A673 (cell line): ENCODE measurements at regions of chr19 and their contacts with region 1.

Region 1: DNA sequence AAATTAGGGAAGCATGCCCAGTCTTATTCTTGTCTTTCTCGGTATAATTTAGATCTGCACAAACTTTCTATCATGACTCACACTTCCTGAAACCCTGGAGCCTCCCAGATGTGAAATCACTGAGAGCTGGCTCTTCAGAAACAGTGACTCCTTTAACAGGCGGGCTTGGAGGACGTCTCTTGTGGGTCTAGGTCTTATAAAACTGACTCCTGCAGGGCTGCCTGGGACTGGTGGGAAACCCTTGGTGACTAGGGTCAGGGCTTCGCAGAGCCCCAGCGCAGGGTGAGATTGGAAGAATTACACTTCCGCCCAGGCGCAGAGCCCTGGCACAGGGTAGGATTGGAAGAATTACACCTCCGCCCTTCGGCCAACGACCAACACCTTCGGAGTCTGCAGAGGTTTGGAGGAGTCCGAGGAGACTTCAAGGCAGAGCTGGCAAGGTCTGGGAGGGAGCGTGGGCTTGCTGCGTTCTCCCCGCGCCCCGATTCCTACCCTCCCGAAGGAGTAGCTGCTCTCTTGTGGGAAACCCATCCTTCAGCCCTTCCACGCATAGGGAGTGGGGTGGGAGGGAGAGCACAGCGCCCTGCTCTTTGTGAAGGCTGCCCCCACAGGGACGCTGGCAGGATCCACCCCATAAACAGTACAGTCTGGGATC is 43.4 kb upstream of the MAP3K10 start:
- DNase-seq: peak; percentile 95
- H3K4me3 ChIP-seq: peak overlapping the region; percentile 55
- H3K27ac ChIP-seq: peak overlapping the region; percentile 92
- H3K4me1 ChIP-seq: peaks cover 38% of the 10 kb centered on the region
- H3K27me3 ChIP-seq: no peaks in the 10 kb centered on the region
- CTCF ChIP-seq: 0 out of 2 replicates have a peak, but pooled peaks have one; percentile 19

Region 2: DNA sequence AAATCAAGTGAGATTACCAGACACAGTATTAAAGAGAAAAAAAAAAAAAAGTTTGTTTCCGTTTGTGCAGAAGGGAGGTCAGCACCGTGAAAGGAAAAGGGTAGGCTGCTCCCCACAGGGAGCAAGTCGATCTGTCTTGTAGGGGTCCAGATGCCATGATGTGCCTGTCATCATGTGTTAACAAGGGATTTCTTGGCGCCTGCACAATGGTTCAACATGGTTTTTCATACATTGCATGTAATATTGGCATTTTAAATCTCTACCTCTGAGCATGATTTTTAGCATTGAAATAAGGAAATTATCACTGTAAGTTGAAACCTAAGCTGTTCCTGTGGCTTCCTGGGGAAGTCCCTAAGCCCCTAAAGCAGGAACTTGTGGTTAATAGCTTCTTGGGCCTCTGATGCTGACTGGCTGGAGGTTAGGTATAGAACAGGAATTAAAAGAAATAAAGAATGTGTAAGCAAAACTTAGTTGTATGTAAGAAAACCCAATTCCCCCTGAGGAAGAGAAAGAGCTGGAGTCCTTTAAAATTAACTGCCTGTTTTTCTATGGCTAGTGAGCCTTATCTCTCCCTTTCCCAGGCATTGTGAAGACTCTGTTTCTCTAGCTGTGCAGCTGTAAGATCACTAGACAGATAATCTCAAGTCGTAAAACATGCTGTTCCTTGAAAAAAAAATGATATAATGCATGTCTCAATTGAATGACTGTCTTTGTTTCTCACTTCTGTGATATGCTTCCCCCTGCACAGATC is 206.0 kb before region 1 on chr19:
- CTCF ChIA-PET with region 1: no interaction called
- POLR2A ChIA-PET with region 1: no interaction called
- intact Hi-C with region 1: loop called (anchors 5 kb)
- DNase-seq: peak; percentile 94
- H3K4me3 ChIP-seq: peak overlapping the region; percentile 3
- H3K27ac ChIP-seq: peak overlapping the region; percentile 95
- H3K4me1 ChIP-seq: peaks cover 68% of the 10 kb centered on the region
- H3K27me3 ChIP-seq: no peaks in the 10 kb centered on the region
- CTCF ChIP-seq: no peak

Region 3: GRCh38 chr19:40217027-40217810 is 69.4 kb after region 1 on chr19:
- CTCF ChIA-PET with region 1: no interaction called
- POLR2A ChIA-PET with region 1: no interaction called
- intact Hi-C with region 1: loop called (anchors 5 kb)
- DNase-seq: peak; percentile 41
- H3K4me3 ChIP-seq: no peak overlapping the region
- H3K27ac ChIP-seq: no peak overlapping the region
- H3K4me1 ChIP-seq: no peaks in the 10 kb centered on the region
- H3K27me3 ChIP-seq: peaks cover 31% of the 10 kb centered on the region
- CTCF ChIP-seq: peak; percentile 81

Region 4: DNA sequence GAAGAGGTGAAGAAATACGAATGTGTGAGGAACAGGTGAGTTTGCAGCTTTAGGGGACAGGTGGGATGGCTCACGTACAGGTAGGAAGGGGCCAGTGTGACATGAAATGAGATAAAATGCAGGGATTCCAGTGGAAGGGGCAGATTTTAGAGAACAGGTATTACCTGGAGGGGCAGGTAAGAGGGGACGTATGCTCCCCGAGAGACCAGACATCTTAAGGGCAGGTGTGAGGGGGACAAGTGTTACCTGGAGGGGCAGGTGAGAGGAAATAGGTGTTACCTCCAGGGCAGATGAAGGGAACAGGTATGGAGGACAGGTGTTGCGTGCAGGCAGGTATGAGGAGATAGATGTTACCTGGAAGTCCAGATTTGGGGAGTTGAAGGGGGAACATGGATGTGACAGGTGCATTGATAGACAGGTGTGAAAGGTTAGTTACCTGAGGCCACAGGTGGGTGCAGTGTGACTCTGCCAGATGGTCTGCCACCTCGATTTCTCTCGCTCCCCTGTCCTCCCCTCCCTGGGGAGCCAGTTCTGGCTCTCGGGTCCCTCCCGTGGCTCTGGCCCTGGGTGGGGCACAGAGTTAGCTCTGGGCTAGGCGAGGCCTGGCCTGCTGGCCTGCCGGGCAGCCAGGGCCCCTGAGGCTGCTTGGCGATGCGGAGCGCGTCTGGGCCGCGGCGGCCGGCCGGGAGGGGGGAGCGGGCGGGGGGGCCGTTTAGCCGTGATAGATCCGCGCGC is 1778.4 kb after region 1 on chr19:
- CTCF ChIA-PET with region 1: interaction called, 16 read pairs
- POLR2A ChIA-PET with region 1: no interaction called
- intact Hi-C with region 1: no loop called
- DNase-seq: no peak
- H3K4me3 ChIP-seq: no peak overlapping the region
- H3K27ac ChIP-seq: no peak overlapping the region
- H3K4me1 ChIP-seq: peaks cover 26% of the 10 kb centered on the region
- H3K27me3 ChIP-seq: no peaks in the 10 kb centered on the region
- CTCF ChIP-seq: no peak